ENCODE measurements at regions of chr11 and their contacts with region 1.

Region 1: DNA sequence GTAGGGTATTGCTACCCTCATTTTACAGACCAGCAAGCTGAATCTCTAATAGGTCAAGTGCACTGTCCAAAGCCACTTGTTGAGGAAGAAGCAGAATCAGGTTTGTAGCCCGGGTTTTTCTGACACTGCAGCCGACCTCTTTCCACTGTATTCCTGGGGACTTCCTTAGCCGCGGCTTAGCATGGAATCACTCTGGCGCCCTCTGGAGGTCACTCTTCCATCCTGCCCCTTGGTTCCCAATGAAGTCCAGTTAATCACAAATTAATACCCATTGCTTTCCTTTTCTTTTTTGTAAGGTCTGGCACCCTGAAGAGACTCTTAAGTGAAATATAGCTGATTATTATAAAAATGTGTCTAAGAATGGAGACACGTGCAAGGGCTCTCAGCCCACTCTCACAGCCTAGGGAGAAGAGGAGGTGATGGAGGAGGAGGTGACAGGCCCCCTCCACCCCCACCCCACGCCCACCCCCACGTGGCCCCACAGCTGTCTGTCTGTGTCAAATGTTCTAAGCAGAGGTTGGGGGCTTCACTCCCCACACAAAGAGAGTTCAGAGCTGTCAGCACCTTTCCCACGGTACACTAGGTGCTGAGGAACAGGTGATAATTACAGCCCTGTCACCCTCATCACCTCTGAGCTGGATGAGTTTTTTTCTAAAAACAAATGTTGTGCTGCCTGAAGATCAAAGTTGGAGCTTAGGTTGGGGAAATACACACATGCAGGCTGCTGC is 57.7 kb upstream of the DRD2 start:
- DNase-seq: peak; percentile 50
- H3K4me3 ChIP-seq: no peak overlapping the region
- H3K27ac ChIP-seq: no peak overlapping the region
- H3K27me3 ChIP-seq: no peaks in the 10 kb centered on the region
- CTCF ChIP-seq: peak; percentile 98

Region 2: GRCh38 chr11:113305440-113306336 is 227.2 kb before region 1 on chr11:
- CTCF ChIA-PET with region 1: interaction called, 139 read pairs
- POLR2A ChIA-PET with region 1: no interaction called
- DNase-seq: peak; percentile 21
- H3K4me3 ChIP-seq: no peak overlapping the region
- H3K27ac ChIP-seq: no peak overlapping the region
- H3K27me3 ChIP-seq: peaks cover 11% of the 10 kb centered on the region
- CTCF ChIP-seq: peak; percentile 98

Region 3: GRCh38 chr11:113314389-113315301 is 218.2 kb before region 1 on chr11 and contains the start of gene TTC12:
- CTCF ChIA-PET with region 1: interaction called, 32 read pairs
- POLR2A ChIA-PET with region 1: no interaction called
- DNase-seq: peak; percentile 61
- H3K4me3 ChIP-seq: peak within 1 kb of the TSS; percentile 95
- H3K27ac ChIP-seq: peak within 1 kb of the TSS; percentile 53
- H3K27me3 ChIP-seq: peaks cover 4% of the 10 kb centered on the region
- CTCF ChIP-seq: no peak
- polyA plus RNA-seq, gene TTC12: 17.6 and 19.0 TPM in 2 replicates

Region 4: DNA sequence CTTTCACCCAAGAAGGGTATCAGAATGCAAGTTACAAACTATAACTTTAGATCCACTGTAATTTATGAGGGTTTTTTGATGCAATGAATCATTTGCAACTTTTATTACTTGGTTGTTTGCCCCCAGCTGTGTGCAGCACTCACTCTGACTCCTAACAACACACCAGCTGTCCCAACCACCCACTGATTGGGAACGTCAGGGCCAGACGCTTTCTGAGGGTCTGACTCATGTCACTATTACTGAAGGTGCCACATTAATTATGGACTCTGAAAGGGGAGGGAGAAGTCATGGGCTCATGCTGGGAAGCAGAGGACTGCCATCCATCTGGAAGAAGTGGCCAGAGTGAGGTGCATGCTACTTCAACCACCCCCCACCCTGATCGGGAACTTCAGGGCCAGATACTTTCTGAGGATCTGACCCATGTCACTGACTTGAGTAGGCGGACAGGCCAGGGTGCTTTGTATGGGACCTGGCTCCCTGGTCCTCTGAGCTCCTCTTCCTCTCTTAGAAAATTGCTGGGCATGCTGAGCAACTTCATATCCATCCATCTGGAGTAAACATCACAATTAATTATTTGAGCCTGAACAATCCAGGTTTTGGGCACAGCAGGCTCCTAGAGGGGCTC is 12.8 kb before region 1 on chr11:
- CTCF ChIA-PET with region 1: interaction called, 31 read pairs
- POLR2A ChIA-PET with region 1: no interaction called
- DNase-seq: no peak
- H3K4me3 ChIP-seq: no peak overlapping the region
- H3K27ac ChIP-seq: no peak overlapping the region
- H3K27me3 ChIP-seq: no peaks in the 10 kb centered on the region
- CTCF ChIP-seq: no peak

Region 5: DNA sequence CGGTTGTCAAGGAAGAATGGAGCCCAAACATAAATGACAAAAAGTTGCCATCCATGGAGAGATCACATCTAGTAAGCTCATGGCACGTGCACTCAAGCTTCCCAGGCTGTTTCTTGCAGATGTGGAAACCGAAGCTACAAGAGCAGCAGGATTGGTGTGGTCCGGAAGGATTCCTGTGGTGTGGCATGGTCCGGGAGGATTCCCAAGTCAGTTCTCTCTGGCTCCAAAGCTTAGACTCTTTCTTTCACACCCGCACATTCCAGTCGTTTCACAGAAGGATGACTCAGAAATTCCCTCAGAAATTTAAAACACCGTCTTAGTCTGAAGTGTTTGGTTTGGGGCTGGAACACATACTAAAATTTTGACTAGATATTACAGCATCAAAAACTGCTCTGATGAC is 20.4 kb after region 1 on chr11:
- CTCF ChIA-PET with region 1: interaction called, 22 read pairs
- POLR2A ChIA-PET with region 1: no interaction called
- DNase-seq: peak; percentile 59
- H3K4me3 ChIP-seq: no peak overlapping the region
- H3K27ac ChIP-seq: no peak overlapping the region
- H3K27me3 ChIP-seq: no peaks in the 10 kb centered on the region
- CTCF ChIP-seq: no peak

Region 6: DNA sequence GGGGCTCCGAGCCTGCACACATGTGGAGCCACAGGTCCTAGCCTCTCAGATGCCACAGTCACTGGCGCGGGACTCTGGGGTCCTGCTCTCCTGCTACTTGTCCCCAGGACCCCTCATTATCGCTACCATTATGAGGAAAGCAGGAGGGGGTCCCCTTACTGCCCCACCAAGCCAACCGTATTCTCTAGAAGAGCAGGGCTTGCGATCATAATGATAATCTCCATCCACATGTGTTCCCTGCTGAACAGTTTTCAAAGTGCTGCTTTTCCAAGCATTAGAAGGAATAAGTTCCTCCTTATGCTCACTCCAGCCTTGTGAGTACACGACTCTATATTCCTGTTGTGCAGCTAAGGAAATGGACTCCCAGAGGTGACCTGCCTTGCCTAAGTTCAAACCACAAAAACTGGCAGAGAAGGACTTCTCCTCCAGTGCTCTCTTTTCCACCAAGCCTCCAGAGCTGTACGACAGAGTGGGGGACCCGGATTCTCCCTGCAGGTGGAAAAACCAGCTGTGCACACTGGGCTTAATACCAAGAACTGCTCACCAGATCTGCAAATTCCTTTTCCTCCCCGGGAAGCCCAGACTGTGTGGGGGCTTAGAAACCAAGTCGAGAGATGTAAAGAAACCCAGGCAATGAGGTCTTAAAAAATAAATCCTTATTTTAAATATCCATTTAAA is 35.1 kb after region 1 on chr11:
- CTCF ChIA-PET with region 1: interaction called, 10 read pairs
- POLR2A ChIA-PET with region 1: no interaction called
- DNase-seq: no peak
- H3K4me3 ChIP-seq: no peak overlapping the region
- H3K27ac ChIP-seq: no peak overlapping the region
- H3K27me3 ChIP-seq: no peaks in the 10 kb centered on the region
- CTCF ChIP-seq: no peak

Region 7: GRCh38 chr11:113730887-113731726 is 198.2 kb after region 1 on chr11:
- CTCF ChIA-PET with region 1: interaction called, 49 read pairs
- POLR2A ChIA-PET with region 1: no interaction called
- DNase-seq: peak; percentile 23
- H3K4me3 ChIP-seq: no peak overlapping the region
- H3K27ac ChIP-seq: no peak overlapping the region
- H3K27me3 ChIP-seq: no peaks in the 10 kb centered on the region
- CTCF ChIP-seq: peak; percentile 62

Measured in AG04450 (cell line).